ENCODE measurements at regions of chr2 and their contacts with region 1.

Region 1: DNA sequence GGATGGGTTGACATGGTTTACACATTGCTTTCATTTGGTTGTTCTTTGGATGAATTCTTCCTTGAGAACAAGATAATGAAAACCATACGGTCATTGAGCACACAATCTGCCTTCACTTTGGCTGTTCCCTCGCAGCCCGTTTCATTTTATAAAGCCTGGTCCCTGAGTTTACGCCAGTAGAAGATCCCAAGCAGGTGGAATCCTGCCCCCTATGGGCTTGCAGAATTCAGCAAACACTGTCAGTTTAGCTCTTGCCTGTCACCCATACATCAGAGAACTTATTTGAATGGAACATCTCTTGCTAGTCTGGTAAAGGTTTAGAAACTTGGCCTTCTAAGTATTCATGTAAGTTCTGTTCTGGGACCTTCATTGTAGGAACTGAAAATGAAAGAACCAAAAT is 666.4 kb upstream of the ZEB2 start:
- DNase-seq: peak in 1 of 2 donors; percentile 19
- ATAC-seq: peak in 1 of 2 donors; percentile 39
- H3K4me3 ChIP-seq: no peak overlapping the region
- H3K27ac ChIP-seq: no peak overlapping the region
- H3K4me1 ChIP-seq: no peaks in the 10 kb centered on the region
- H3K27me3 ChIP-seq: no peaks in the 10 kb centered on the region
- CTCF ChIP-seq: peak in 1 of 5 experiments; percentile 12
- POLR2A ChIP-seq: no peak

Region 2: GRCh38 chr2:144548532-144549191 is 637.6 kb before region 1 on chr2:
- in situ Hi-C with region 1: loop called in 1 of 4 experiments (anchors 25 kb)
- intact Hi-C with region 1: no loop called
- DNase-seq: no peak
- ATAC-seq: no peak
- H3K4me3 ChIP-seq: no peak overlapping the region
- H3K27ac ChIP-seq: no peak overlapping the region
- H3K4me1 ChIP-seq: no peaks in the 10 kb centered on the region
- H3K27me3 ChIP-seq: no peaks in the 10 kb centered on the region
- CTCF ChIP-seq: no peak
- POLR2A ChIP-seq: no peak